ENCODE measurements at regions of chr16 and their contacts with region 1.

Region 1: DNA sequence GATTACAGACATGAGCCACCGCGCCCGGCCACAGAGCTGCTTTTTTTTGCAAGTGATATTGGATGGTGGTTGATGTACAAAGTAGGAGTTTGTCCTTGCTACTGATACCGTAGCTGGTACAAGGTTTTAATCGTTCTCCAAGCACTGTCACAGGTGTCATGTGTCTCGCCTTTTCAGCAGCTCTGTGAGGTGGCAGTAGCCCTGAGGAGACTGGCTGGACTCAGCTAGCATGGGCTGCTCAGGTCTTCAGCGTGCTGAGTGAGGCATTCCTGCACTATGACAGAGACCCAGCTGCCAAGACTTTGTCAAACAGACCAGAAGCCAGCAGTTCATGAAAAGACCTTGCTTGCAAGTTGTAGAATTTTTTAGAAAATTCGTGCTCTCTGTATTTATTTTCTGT is 7.2 kb downstream of the WWOX start:
- DNase-seq: no peak
- H3K4me3 ChIP-seq: no peak overlapping the region
- H3K27ac ChIP-seq: no peak overlapping the region
- H3K4me1 ChIP-seq: no peaks in the 10 kb centered on the region
- H3K27me3 ChIP-seq: no peaks in the 10 kb centered on the region
- CTCF ChIP-seq: no peak
- POLR2A ChIP-seq: no peak

Region 2: GRCh38 chr16:77812856-77813500 is 293.7 kb before region 1 on chr16:
- intact Hi-C with region 1: no loop called
- DNase-seq: no peak
- H3K4me3 ChIP-seq: no peak overlapping the region
- H3K27ac ChIP-seq: no peak overlapping the region
- H3K4me1 ChIP-seq: no peaks in the 10 kb centered on the region
- H3K27me3 ChIP-seq: no peaks in the 10 kb centered on the region
- CTCF ChIP-seq: no peak
- POLR2A ChIP-seq: no peak

Region 3: DNA sequence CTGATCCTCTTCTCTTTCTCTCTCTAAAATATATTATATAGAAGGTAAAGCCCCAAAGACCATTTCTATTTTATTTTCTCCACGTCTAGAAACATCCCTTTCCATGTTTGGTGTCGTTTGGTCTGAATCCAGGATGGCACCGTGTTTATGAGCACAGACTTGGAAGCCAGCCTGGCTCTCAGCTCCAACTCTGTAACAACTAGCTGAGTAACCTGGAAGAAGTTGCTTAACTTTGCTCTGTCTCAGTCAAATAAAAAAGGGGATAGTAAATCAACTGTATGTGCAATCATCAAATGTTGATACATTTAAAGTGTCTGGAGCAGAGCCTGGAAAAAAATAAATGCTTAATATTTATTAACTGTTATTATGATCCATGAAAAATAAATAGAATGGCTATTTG is 1743.7 kb after region 1 on chr16:
- intact Hi-C with region 1: loop called (anchors 5 kb)
- DNase-seq: peak in 1 of 2 donors; percentile 43
- H3K4me3 ChIP-seq: no peak overlapping the region
- H3K27ac ChIP-seq: no peak overlapping the region
- H3K4me1 ChIP-seq: no peaks in the 10 kb centered on the region
- H3K27me3 ChIP-seq: no peaks in the 10 kb centered on the region
- CTCF ChIP-seq: no peak
- POLR2A ChIP-seq: no peak

Measured in breast epithelium (tissue), 4 donors.